ENCODE measurements at regions of chr1 and their contacts with region 1.

Region 1: DNA sequence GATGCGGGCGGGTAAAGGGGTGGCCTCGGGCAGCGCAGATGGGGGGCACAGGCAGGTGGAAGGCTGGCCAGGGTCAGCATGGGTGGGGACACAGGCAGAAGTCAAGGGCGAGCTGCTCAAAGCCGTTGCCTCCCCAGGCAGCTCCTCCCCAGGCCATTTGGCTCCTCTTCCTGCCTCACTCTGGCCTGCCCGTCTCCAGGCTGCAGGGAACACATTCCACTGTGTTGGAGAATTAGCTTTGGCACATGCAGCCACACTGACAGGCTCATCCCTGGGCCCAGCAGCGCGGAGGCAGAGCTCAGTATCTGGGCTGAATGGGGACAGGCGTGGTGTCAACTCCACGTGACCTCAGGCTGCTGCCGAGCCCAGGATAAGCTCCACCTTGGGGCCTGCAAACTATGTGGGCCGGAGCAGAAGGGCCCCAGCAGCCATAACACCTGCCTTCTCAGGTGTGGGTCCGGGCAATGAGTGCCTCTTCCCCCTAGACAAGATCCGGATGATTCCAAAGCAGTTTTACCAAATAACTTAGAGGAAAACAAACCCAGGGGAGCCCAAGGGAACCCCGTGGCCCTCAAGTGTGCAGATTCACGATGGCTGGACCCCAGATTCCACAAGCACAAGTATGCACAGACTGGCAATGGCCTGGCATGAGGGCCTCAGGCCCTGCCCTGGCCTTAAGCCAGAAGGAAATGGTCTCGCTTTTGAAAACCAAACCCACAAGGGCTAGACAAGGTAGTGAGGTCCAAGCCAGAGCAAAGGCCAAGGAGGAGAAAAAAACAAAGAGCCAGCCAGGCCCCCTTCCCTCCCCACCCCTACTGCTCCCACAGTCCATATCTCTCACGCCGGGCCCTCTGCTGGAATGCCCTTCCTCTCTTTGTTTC is 40.2 kb downstream of the HSPG2 start:
- DNase-seq: peak; percentile 77 to 83
- H3K4me3 ChIP-seq: no peak overlapping the region
- H3K27ac ChIP-seq: peak overlapping the region; percentile 93
- H3K4me1 ChIP-seq: peaks cover 22 to 54% of the 10 kb centered on the region in 2 donors
- H3K27me3 ChIP-seq: no peaks in the 10 kb centered on the region
- CTCF ChIP-seq: no peak
- POLR2A ChIP-seq: no peak

Region 2: GRCh38 chr1:21939650-21940374 is 42.9 kb after region 1 on chr1:
- intact Hi-C with region 1: loop called (anchors 10 kb)
- DNase-seq: peak; percentile 92 to 94
- H3K4me3 ChIP-seq: no peak overlapping the region
- H3K27ac ChIP-seq: peak overlapping the region; percentile 93 to 94
- H3K4me1 ChIP-seq: peaks cover 0 to 20% of the 10 kb centered on the region in 2 donors
- H3K27me3 ChIP-seq: no peaks in the 10 kb centered on the region
- CTCF ChIP-seq: peak; percentile 49 to 81 (median 66)
- POLR2A ChIP-seq: no peak

Region 3: GRCh38 chr1:22153660-22154437 is 257.0 kb after region 1 on chr1:
- intact Hi-C with region 1: no loop called
- DNase-seq: no peak
- H3K4me3 ChIP-seq: no peak overlapping the region
- H3K27ac ChIP-seq: no peak overlapping the region
- H3K4me1 ChIP-seq: no peaks in the 10 kb centered on the region
- H3K27me3 ChIP-seq: no peaks in the 10 kb centered on the region
- CTCF ChIP-seq: no peak
- POLR2A ChIP-seq: no peak

Region 4: DNA sequence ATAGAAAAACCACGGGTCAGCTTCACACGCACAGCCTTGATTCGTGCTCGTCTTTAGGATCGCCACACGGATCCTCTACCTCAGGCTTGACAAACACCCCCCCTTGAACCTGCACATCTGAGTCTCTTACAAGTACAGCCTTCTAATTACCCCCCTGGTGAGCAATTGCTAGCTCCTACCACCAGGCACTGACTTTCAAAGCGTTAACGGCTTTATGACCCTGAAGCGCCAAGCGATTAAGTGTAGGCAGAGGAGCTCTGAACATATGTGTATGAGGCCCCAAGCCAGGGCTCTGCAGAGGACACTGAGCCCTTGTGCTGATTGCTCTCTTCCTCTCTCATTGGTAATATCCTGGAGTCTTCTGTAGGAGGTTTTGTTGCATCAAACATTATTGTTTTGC is 610.7 kb after region 1 on chr1:
- intact Hi-C with region 1: no loop called
- DNase-seq: no peak
- H3K4me3 ChIP-seq: no peak overlapping the region
- H3K27ac ChIP-seq: no peak overlapping the region
- H3K4me1 ChIP-seq: no peaks in the 10 kb centered on the region
- H3K27me3 ChIP-seq: no peaks in the 10 kb centered on the region
- CTCF ChIP-seq: no peak
- POLR2A ChIP-seq: no peak